MCF 10A (cell line): ENCODE measurements at regions of chr1 and their contacts with region 1.

Region 1: GRCh38 chr1:28602536-28603439 is 10.7 kb downstream of the RAB42 start:
- DNase-seq: peak; percentile 87
- H3K4me3 Mint-ChIP-seq: no peak overlapping the region
- H3K27ac Mint-ChIP-seq: no peak overlapping the region
- H3K4me1 Mint-ChIP-seq: peaks cover 10% of the 10 kb centered on the region
- H3K27me3 Mint-ChIP-seq: no peaks in the 10 kb centered on the region
- CTCF ChIP-seq: peak; percentile 76

Region 2: GRCh38 chr1:28359592-28360239 is 243.1 kb before region 1 on chr1:
- CTCF ChIA-PET with region 1: interaction called, 18 read pairs
- POLR2A ChIA-PET with region 1: no interaction called
- intact Hi-C with region 1: loop called (anchors 1 kb)
- DNase-seq: peak; percentile 64
- H3K4me3 Mint-ChIP-seq: no peak overlapping the region
- H3K27ac Mint-ChIP-seq: no peak overlapping the region
- H3K4me1 Mint-ChIP-seq: no peaks in the 10 kb centered on the region
- H3K27me3 Mint-ChIP-seq: no peaks in the 10 kb centered on the region
- CTCF ChIP-seq: peak; percentile 63

Region 3: GRCh38 chr1:28552758-28553663 is 49.8 kb before region 1 on chr1 and contains the start of gene TRNAU1AP:
- CTCF ChIA-PET with region 1: interaction called, 6 read pairs
- POLR2A ChIA-PET with region 1: interaction called, 3 read pairs
- intact Hi-C with region 1: loop called (anchors 1 kb)
- DNase-seq: peak; percentile 95
- H3K4me3 Mint-ChIP-seq: peak within 1 kb of the TSS; percentile 100
- H3K27ac Mint-ChIP-seq: peak within 1 kb of the TSS; percentile 97
- H3K4me1 Mint-ChIP-seq: no peaks in the 10 kb centered on the region
- H3K27me3 Mint-ChIP-seq: no peaks in the 10 kb centered on the region
- CTCF ChIP-seq: no peak
- total RNA-seq, gene TRNAU1AP: 28.2 and 33.4 TPM in 2 replicates